ENCODE measurements at regions of chr5 and their contacts with region 1.

Region 1: GRCh38 chr5:133051580-133052332 is at the start of gene HSPA4:
- DNase-seq: peak; percentile 93 to 100 (median 97)
- ATAC-seq: peak; percentile 89
- H3K4me3 ChIP-seq: peak within 1 kb of the TSS; percentile 88 to 100
- H3K4me3 Mint-ChIP-seq: peak within 1 kb of the TSS; percentile 99
- H3K27ac ChIP-seq: peak within 1 kb of the TSS; percentile 97
- H3K27ac Mint-ChIP-seq: peak within 1 kb of the TSS; percentile 100
- H3K4me1 ChIP-seq: peaks cover 46% of the 10 kb centered on the region
- H3K4me1 Mint-ChIP-seq: peaks cover 56% of the 10 kb centered on the region
- H3K27me3 ChIP-seq: no peaks in the 10 kb centered on the region
- H3K27me3 Mint-ChIP-seq: no peaks in the 10 kb centered on the region
- CTCF ChIP-seq: no peak
- total RNA-seq, gene HSPA4: 24.4 to 29.7 TPM

Region 2: GRCh38 chr5:132556763-132557477 is 494.8 kb before region 1 on chr5 and contains the start of gene RAD50:
- CTCF ChIA-PET with region 1: no interaction called
- POLR2A ChIA-PET with region 1: interaction called, 6 read pairs
- intact Hi-C with region 1: loop called in 1 of 2 experiments (anchors 5 kb)
- DNase-seq: peak; percentile 83 to 96 (median 91)
- ATAC-seq: peak; percentile 95
- H3K4me3 ChIP-seq: peak within 1 kb of the TSS; percentile 62 to 97
- H3K4me3 Mint-ChIP-seq: peak within 1 kb of the TSS; percentile 98
- H3K27ac ChIP-seq: peak within 1 kb of the TSS; percentile 68 to 91
- H3K27ac Mint-ChIP-seq: peak within 1 kb of the TSS; percentile 98
- H3K4me1 ChIP-seq: peaks cover 21% of the 10 kb centered on the region
- H3K4me1 Mint-ChIP-seq: peaks cover 28% of the 10 kb centered on the region
- H3K27me3 ChIP-seq: no peaks in the 10 kb centered on the region
- H3K27me3 Mint-ChIP-seq: no peaks in the 10 kb centered on the region
- CTCF ChIP-seq: no peak
- total RNA-seq, gene RAD50: 8.0 to 8.7 TPM

Region 3: GRCh38 chr5:132963175-132964104 is 88.3 kb before region 1 on chr5 and contains the start of gene AFF4:
- CTCF ChIA-PET with region 1: interaction called, 3 read pairs
- POLR2A ChIA-PET with region 1: interaction called, 49 read pairs
- intact Hi-C with region 1: loop called (anchors 1 kb)
- DNase-seq: peak; percentile 69 to 93 (median 84)
- ATAC-seq: peak; percentile 75
- H3K4me3 ChIP-seq: peak within 1 kb of the TSS; percentile 52 to 71
- H3K4me3 Mint-ChIP-seq: peak within 1 kb of the TSS; percentile 95
- H3K27ac ChIP-seq: peak within 1 kb of the TSS; percentile 84 to 92
- H3K27ac Mint-ChIP-seq: peak within 1 kb of the TSS; percentile 99
- H3K4me1 ChIP-seq: peaks cover 35% of the 10 kb centered on the region
- H3K4me1 Mint-ChIP-seq: peaks cover 43% of the 10 kb centered on the region
- H3K27me3 ChIP-seq: no peaks in the 10 kb centered on the region
- H3K27me3 Mint-ChIP-seq: no peaks in the 10 kb centered on the region
- CTCF ChIP-seq: no peak
- total RNA-seq, gene AFF4: 98.0 to 104 TPM

Region 4: GRCh38 chr5:133063965-133064364 is 12.2 kb after region 1 on chr5:
- CTCF ChIA-PET with region 1: no interaction called
- POLR2A ChIA-PET with region 1: no interaction called
- intact Hi-C with region 1: no loop called
- DNase-seq: no peak
- ATAC-seq: no peak
- H3K4me3 ChIP-seq: no peak overlapping the region
- H3K4me3 Mint-ChIP-seq: no peak overlapping the region
- H3K27ac ChIP-seq: no peak overlapping the region
- H3K27ac Mint-ChIP-seq: no peak overlapping the region
- H3K4me1 ChIP-seq: peaks cover 20% of the 10 kb centered on the region
- H3K4me1 Mint-ChIP-seq: peaks cover 41% of the 10 kb centered on the region
- H3K27me3 ChIP-seq: no peaks in the 10 kb centered on the region
- H3K27me3 Mint-ChIP-seq: no peaks in the 10 kb centered on the region
- CTCF ChIP-seq: no peak

Region 5: GRCh38 chr5:134637161-134637582 is 1585.4 kb after region 1 on chr5:
- CTCF ChIA-PET with region 1: no interaction called
- POLR2A ChIA-PET with region 1: no interaction called
- intact Hi-C with region 1: loop called in 1 of 2 experiments (anchors 5 kb)
- DNase-seq: no peak
- ATAC-seq: no peak
- H3K4me3 ChIP-seq: no peak overlapping the region
- H3K4me3 Mint-ChIP-seq: no peak overlapping the region
- H3K27ac ChIP-seq: no peak overlapping the region
- H3K27ac Mint-ChIP-seq: no peak overlapping the region
- H3K4me1 ChIP-seq: no peaks in the 10 kb centered on the region
- H3K4me1 Mint-ChIP-seq: peaks cover under 1% of the 10 kb centered on the region
- H3K27me3 ChIP-seq: no peaks in the 10 kb centered on the region
- H3K27me3 Mint-ChIP-seq: no peaks in the 10 kb centered on the region
- CTCF ChIP-seq: no peak

Measured in CD8-positive, alpha-beta T cell (primary cell).